Heart left ventricle (tissue), 16 donors: ENCODE measurements at regions of chr9 and their contacts with region 1.

Region 1: GRCh38 chr9:14096258-14096922 is 217.6 kb downstream of the NFIB start:
- DNase-seq: peak in 4 of 5 donors; percentile 40 to 53 (median 42)
- ATAC-seq: peak; percentile 81 to 87 (median 84)
- H3K4me3 ChIP-seq: peak overlapping the region in 10 of 12 donors; percentile 9 to 48 (median 32)
- H3K27ac ChIP-seq: peak overlapping the region; percentile 39 to 90 (median 82)
- H3K4me1 ChIP-seq: peaks cover 0 to 71% (median 49%) of the 10 kb centered on the region in 12 donors
- H3K27me3 ChIP-seq: no peaks in the 10 kb centered on the region
- CTCF ChIP-seq: no peak
- POLR2A ChIP-seq: no peak

Region 2: DNA sequence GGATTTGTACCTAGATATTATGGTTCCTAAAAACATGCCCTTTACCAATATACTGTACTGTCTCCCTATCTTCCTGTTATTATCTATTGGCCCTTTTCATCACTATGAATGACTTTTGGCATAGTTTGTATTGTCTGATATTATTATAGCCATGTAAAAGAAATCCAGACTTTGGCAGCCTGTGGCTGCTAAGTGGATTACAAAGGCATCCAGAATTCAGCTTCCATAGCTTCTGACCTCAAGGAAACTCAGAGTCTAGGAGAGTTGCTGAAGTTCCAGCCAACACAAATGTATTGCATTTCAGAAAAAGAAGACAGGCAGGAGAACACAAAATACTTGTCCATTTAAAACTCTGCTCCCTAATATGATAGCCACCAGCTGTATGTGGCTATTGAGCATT is 497.7 kb before region 1 on chr9:
- intact Hi-C with region 1: no loop called
- DNase-seq: no peak
- ATAC-seq: peak; percentile 53 to 80 (median 65)
- H3K4me3 ChIP-seq: no peak overlapping the region
- H3K27ac ChIP-seq: peak overlapping the region in 1 of 12 donors; percentile 22
- H3K4me1 ChIP-seq: peaks cover 0 to 19% (median 0%) of the 10 kb centered on the region in 12 donors
- H3K27me3 ChIP-seq: no peaks in the 10 kb centered on the region
- CTCF ChIP-seq: no peak
- POLR2A ChIP-seq: no peak

Region 3: DNA sequence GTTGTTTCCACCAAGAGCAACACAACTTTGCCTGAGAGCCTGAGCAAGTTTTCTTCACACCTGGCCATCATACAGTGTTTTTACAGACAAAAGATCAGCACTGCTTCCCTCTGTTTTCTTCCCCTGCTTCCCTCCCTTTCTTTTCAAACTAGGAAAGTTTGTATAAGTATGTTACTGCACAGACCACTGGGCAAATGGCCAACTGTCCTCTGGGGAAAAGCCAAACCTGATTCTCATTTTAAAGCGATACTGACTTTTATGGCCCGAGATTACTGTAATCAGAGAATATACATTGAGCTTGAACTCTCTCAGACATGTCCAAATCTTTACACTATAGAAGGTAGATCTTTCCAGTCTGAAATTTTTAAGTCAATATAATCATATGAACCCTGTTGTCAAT is 197.4 kb before region 1 on chr9:
- intact Hi-C with region 1: loop called in 2 of 10 experiments (anchors 2 to 5 kb)
- DNase-seq: peak in 4 of 5 donors; percentile 30 to 44 (median 36)
- ATAC-seq: no peak
- H3K4me3 ChIP-seq: no peak overlapping the region
- H3K27ac ChIP-seq: peak overlapping the region in 11 of 12 donors; percentile 42 to 84 (median 66)
- H3K4me1 ChIP-seq: peaks cover 6 to 66% (median 24%) of the 10 kb centered on the region in 12 donors
- H3K27me3 ChIP-seq: no peaks in the 10 kb centered on the region
- CTCF ChIP-seq: no peak
- POLR2A ChIP-seq: no peak

Region 4: DNA sequence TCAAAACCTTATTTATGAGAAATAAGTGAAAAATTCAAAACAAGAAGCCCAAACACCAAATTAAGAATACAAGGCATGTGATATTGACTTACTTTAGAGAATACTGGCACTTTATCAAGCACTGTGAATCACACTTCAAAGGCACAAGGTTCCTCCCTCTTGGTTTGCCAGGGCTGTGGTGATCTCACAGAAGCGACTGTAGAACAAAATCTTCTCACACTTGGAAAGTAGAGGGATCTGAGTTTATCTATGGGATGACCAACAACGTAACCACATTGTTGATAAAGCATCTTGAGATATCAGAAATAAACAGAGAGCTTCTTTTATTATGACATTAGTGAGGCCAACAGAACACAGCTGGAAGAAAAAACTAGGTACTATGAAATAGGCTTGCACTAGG is 78.3 kb before region 1 on chr9:
- intact Hi-C with region 1: no loop called
- DNase-seq: no peak
- ATAC-seq: no peak
- H3K4me3 ChIP-seq: no peak overlapping the region
- H3K27ac ChIP-seq: peak overlapping the region in 5 of 12 donors; percentile 6 to 28 (median 11)
- H3K4me1 ChIP-seq: peaks cover 0 to 36% (median 9%) of the 10 kb centered on the region in 12 donors
- H3K27me3 ChIP-seq: no peaks in the 10 kb centered on the region
- CTCF ChIP-seq: no peak
- POLR2A ChIP-seq: no peak

Region 5: GRCh38 chr9:14238552-14238951 is 142.2 kb after region 1 on chr9:
- intact Hi-C with region 1: loop called in 1 of 10 experiments (anchors 2 kb)
- DNase-seq: no peak
- ATAC-seq: peak; percentile 47 to 90 (median 72)
- H3K4me3 ChIP-seq: no peak overlapping the region
- H3K27ac ChIP-seq: peak overlapping the region in 11 of 12 donors; percentile 34 to 81 (median 72)
- H3K4me1 ChIP-seq: peaks cover 18 to 91% (median 67%) of the 10 kb centered on the region in 12 donors
- H3K27me3 ChIP-seq: no peaks in the 10 kb centered on the region
- CTCF ChIP-seq: no peak
- POLR2A ChIP-seq: no peak

Region 6: GRCh38 chr9:14322211-14323082 is 226.1 kb after region 1 on chr9:
- intact Hi-C with region 1: loop called in 6 of 10 experiments (anchors 2 to 5 kb)
- DNase-seq: peak; percentile 94 to 96 (median 95)
- ATAC-seq: peak; percentile 86 to 96 (median 92)
- H3K4me3 ChIP-seq: peak overlapping the region; percentile 65 to 84 (median 78)
- H3K27ac ChIP-seq: peak overlapping the region; percentile 93 to 100 (median 98)
- H3K4me1 ChIP-seq: peaks cover 8 to 82% (median 44%) of the 10 kb centered on the region in 12 donors
- H3K27me3 ChIP-seq: peaks cover 0 to 6% (median 0%) of the 10 kb centered on the region in 9 donors
- CTCF ChIP-seq: peak; percentile 17 to 75 (median 60)
- POLR2A ChIP-seq: peak in 1 of 2 donors; percentile 55

Region 7: DNA sequence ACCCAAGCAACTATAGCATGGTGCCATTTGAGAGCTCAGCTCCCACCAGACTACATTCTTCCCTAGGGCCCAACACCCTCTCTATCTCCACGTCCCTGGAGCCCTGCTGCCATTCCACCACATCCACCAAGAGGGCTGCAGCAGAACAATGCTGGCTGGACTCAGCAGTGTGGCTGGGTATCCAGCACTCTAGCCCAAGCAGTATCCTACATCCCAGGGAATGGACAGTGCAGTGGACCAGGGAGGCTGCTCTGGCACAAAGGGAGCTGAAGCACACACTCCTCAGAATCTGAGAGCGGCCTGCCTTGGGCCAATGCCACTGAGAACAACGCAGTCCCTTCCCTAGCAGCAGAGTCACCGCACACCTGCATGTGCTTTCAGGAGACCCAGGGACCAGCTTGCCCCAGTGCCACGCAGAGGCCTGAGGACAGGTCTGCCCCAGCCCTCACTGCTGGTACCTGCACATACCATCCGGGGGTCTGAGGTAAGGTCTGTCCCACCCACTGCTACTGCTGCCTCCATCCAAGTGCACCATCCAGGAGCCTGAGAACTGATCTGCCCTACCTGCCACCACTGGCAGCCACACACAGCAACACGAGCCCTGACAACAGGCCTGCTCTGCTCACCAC is 500.9 kb after region 1 on chr9:
- intact Hi-C with region 1: no loop called
- DNase-seq: no peak
- ATAC-seq: peak in 2 of 4 donors; percentile 14 to 34
- H3K4me3 ChIP-seq: no peak overlapping the region
- H3K27ac ChIP-seq: no peak overlapping the region
- H3K4me1 ChIP-seq: no peaks in the 10 kb centered on the region
- H3K27me3 ChIP-seq: no peaks in the 10 kb centered on the region
- CTCF ChIP-seq: no peak
- POLR2A ChIP-seq: no peak